Ascending aorta (tissue), 2 donors: ENCODE measurements at regions of chr19 and their contacts with region 1.

Region 1: DNA sequence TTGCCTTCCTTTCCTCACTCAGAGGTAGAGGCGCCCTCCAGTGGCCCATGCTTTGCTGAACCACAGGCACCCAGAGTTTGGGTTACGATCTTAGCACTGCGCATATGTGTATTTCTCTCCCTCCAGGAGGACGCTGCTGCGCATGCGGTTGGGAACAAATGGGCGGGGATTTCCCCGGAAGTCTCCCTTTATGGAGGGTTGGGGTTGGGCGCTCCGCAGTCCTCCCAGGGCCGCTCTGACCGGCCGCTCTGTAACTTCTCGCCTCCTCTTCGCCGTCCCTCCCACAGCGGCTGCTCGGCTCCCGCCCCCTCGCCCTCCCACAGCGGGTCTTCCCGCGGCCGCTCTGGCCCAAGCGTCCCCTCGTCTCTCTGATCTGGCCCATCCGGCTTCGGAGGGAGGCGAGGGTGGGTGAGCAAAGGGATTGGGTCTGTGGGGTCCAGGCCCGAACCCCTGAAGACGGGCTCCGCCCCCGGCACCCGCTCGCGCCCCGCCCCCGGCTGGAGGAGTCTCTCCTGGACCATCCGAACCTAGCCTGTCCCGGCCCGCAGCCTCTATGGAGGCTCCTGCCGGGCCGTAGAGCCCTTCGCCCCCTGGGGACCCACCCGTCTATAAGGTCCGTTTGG is at the start of gene MEGF8:
- DNase-seq: peak; percentile 92 to 99
- H3K4me3 ChIP-seq: peak within 1 kb of the TSS; percentile 66 to 85
- H3K27ac ChIP-seq: peak within 1 kb of the TSS; percentile 38 to 48
- H3K4me1 ChIP-seq: peaks cover 5 to 29% of the 10 kb centered on the region in 2 donors
- H3K27me3 ChIP-seq: peaks cover 11% of the 10 kb centered on the region
- CTCF ChIP-seq: peak; percentile 81 to 89 (median 82)
- total RNA-seq, gene MEGF8: 61.8 TPM

Region 2: GRCh38 chr19:41959056-41960053 is 366.0 kb before region 1 on chr19 and contains the start of gene RABAC1:
- intact Hi-C with region 1: loop called (anchors 5 kb)
- DNase-seq: peak; percentile 64 to 95
- H3K4me3 ChIP-seq: peak within 1 kb of the TSS; percentile 83 to 96
- H3K27ac ChIP-seq: peak within 1 kb of the TSS; percentile 92 to 93
- H3K4me1 ChIP-seq: peaks cover 3 to 9% of the 10 kb centered on the region in 2 donors
- H3K27me3 ChIP-seq: no peaks in the 10 kb centered on the region
- CTCF ChIP-seq: no peak
- total RNA-seq, gene RABAC1: 360 TPM

Region 3: DNA sequence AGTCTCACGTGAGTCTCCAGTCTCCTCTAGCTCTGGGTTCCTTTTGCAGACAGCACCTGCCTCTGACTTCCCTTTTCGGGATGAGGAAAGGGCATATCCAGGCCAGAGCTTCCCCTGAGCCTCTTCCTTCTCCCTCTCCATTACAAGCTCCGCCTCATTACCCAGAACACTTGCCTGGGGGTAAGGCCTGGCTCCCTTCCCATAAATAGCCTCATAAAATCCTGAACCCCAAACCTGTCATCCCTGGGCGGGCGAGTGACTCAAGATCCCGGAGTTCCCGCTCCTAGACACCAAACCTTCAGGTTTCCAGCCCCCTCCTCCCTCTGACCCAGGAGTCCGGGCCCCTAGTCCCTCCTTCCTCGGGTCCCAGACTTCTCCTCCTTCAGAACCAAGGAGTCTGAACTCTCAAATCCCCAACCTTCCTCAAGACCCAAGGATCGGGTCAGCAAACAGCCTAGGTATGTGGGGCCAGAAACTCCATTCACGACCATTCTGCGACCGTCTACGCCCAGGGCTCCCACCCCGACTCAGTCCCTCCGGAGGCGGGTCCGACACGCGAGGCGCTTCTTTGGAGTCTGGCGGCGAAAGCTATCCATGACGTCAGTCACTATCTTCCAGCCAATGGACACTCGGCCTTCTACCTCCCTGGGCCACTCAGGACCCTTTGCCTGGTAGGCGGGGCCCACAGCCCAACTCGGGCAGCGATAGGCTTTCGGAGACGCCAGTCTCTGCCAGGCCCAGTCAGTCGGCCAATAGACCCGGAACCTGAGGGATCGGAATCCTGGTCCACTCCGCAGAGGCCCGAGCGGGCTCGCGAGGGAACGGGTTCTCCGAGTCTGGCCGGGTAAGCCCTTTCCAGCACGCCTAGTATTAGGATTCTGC is 71.2 kb after region 1 on chr19:
- intact Hi-C with region 1: loop called (anchors 2 kb)
- DNase-seq: peak; percentile 98 to 99
- H3K4me3 ChIP-seq: peak overlapping the region; percentile 54 to 68
- H3K27ac ChIP-seq: peak overlapping the region; percentile 70 to 76
- H3K4me1 ChIP-seq: peaks cover 7 to 14% of the 10 kb centered on the region in 2 donors
- H3K27me3 ChIP-seq: no peaks in the 10 kb centered on the region
- CTCF ChIP-seq: no peak